ENCODE measurements at regions of chr17 and their contacts with region 1.

Region 1: DNA sequence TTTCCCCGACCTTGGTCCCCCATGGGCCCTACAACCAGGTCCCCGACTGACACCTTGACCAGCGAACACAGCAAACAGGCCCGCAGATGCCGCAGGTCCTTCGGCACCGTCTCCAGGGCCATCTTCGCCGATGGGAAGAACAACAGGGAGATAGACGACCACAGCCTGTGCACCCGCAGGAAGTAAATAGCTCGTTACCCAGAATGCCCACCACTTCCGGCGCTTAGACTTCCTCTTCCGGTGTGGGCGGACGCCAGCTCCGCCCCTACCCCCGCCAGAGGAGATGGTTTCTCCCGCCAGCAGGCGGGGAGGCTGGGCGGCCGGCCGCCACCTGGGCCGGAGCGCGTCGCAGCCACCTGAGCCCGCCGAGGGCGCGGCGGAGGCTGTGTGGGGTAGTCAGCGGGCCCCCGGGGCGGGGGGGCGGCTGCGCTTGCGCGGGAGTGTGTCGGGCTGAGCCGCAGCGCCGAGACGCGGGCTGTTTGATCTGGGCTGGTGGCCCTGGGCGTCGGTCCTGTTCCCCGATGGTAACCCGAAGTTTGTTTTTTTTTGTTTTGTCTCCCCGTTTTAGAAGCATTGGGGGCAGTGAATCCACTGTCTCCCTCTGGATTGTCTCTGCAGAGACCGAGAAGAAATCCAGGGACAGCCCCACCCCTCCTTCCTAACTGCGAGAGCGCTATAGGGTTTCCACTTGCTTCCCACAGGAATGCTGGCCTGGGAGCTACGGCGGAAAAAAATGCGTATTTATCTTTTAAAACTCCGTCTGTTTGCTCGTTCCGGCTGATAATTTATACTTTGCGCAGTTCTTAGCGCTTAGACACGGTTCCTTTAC is at the start of gene SUPT4H1:
- DNase-seq: peak; percentile 93
- H3K4me3 Mint-ChIP-seq: peak within 1 kb of the TSS; percentile 100
- H3K27ac Mint-ChIP-seq: peak within 1 kb of the TSS; percentile 97
- H3K4me1 Mint-ChIP-seq: peaks cover 53% of the 10 kb centered on the region
- H3K27me3 Mint-ChIP-seq: no peaks in the 10 kb centered on the region
- total RNA-seq, gene SUPT4H1: 85.8 to 91.0 TPM

Region 2: GRCh38 chr17:58189436-58190146 is 162.6 kb before region 1 on chr17:
- CTCF ChIA-PET with region 1: no interaction called
- POLR2A ChIA-PET with region 1: no interaction called
- DNase-seq: no peak
- H3K4me3 Mint-ChIP-seq: no peak overlapping the region
- H3K27ac Mint-ChIP-seq: no peak overlapping the region
- H3K4me1 Mint-ChIP-seq: peaks cover 3% of the 10 kb centered on the region
- H3K27me3 Mint-ChIP-seq: peaks cover 10% of the 10 kb centered on the region

Region 3: DNA sequence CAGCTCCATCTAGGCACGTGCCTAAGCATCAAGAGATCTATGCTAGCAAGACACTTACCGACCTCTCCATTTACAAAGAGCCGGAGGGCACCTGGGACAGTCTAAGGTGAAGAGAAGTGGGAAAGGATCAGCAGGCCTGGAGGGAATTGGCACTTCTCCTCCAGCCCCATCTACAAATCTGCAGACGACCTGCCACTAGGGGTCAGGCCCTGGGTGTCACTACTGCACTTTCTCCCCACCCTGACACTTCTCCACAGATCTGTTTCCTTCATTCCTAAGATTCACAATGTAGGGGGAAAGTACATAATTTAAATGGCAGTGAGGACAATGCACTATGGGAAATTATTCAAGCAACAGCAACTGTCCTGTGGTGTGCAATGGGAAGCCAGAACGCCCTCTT is 141.3 kb before region 1 on chr17:
- CTCF ChIA-PET with region 1: no interaction called
- POLR2A ChIA-PET with region 1: no interaction called
- DNase-seq: no peak
- H3K4me3 Mint-ChIP-seq: no peak overlapping the region
- H3K27ac Mint-ChIP-seq: no peak overlapping the region
- H3K4me1 Mint-ChIP-seq: peaks cover 5% of the 10 kb centered on the region
- H3K27me3 Mint-ChIP-seq: no peaks in the 10 kb centered on the region

Region 4: GRCh38 chr17:58329035-58329809 is 23.0 kb before region 1 on chr17:
- CTCF ChIA-PET with region 1: interaction called, 18 read pairs
- POLR2A ChIA-PET with region 1: interaction called, 1,460 read pairs
- DNase-seq: peak; percentile 85
- H3K4me3 Mint-ChIP-seq: peak overlapping the region; percentile 98
- H3K27ac Mint-ChIP-seq: peak overlapping the region; percentile 99
- H3K4me1 Mint-ChIP-seq: peaks cover 37% of the 10 kb centered on the region
- H3K27me3 Mint-ChIP-seq: peaks cover 2% of the 10 kb centered on the region

Region 5: DNA sequence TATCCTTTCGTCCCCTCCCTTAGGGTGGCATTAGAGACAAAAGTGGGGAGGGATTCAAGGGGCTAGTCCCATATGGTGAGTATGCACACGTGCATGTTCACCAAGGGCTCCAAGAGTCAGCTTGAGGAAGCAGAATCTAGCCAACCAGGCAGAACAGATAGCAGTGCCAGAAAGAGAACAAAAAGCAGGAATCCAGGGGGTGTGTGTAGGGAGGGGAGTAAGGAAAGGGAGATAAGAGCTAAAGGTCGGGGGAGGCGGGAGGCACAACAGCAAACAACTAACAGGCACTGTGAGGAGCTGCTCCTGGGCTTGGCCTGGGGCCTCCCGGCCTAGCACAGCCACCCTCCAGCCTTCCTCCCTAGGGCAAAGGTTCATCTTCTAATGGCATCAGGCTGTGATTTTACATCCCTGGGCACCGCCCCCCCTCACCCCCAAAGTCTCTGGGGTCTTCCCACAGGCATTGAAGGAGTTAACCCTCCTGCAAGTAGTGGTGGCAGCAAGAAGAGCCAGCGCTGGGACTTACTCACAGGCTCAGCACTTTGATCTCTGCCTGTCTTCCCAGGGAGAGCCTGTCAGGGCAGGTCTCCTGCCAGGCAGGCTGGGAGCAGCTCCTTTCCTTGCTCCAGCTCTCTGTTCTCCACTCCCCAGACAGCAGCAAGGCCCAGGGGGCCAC is 12.2 kb after region 1 on chr17:
- CTCF ChIA-PET with region 1: interaction called, 3 read pairs
- POLR2A ChIA-PET with region 1: interaction called, 62 read pairs
- DNase-seq: no peak
- H3K4me3 Mint-ChIP-seq: no peak overlapping the region
- H3K27ac Mint-ChIP-seq: no peak overlapping the region
- H3K4me1 Mint-ChIP-seq: peaks cover under 1% of the 10 kb centered on the region
- H3K27me3 Mint-ChIP-seq: no peaks in the 10 kb centered on the region

Region 6: GRCh38 chr17:58382108-58382871 is 30.1 kb after region 1 on chr17:
- CTCF ChIA-PET with region 1: no interaction called
- POLR2A ChIA-PET with region 1: interaction called, 55 read pairs
- DNase-seq: no peak
- H3K4me3 Mint-ChIP-seq: no peak overlapping the region
- H3K27ac Mint-ChIP-seq: peak overlapping the region; percentile 53
- H3K4me1 Mint-ChIP-seq: peaks cover 36% of the 10 kb centered on the region
- H3K27me3 Mint-ChIP-seq: no peaks in the 10 kb centered on the region

Region 7: DNA sequence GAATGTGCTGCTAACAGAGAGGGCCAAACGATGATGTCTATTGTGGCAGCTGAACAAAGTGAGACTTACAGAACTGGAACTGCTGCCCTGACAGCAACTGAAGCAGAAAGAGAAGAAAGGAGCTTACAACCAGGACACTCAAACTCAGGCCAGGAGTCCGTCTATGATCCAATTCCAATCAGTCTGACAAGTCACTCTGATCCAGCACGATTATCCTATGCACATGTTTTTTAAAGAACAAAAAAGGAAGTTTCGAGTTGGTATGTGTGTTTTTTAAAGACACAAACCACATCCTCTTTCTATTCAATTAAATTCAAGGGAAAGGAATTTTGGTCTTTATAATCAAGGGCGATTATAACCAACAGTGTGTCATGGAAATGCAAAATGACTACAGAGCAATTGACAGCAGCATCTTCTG is 204.6 kb after region 1 on chr17:
- CTCF ChIA-PET with region 1: no interaction called
- POLR2A ChIA-PET with region 1: no interaction called
- DNase-seq: no peak
- H3K4me3 Mint-ChIP-seq: no peak overlapping the region
- H3K27ac Mint-ChIP-seq: no peak overlapping the region
- H3K4me1 Mint-ChIP-seq: peaks cover 6% of the 10 kb centered on the region
- H3K27me3 Mint-ChIP-seq: peaks cover 4% of the 10 kb centered on the region